Activated T-helper 1 cell treated with anti-CD3 and anti-CD28 coated beads, Interleukin-12 subunit alpha, Interleukin-12 subunit beta, Interleukin-2, Interleukin-4 antibody, amounts not matched to agents 30 ng/mL and 10 ng/mL and 1 ng/mL, durations not matched to agents 14 hours and 24 hours and 36 hours (primary cell): ENCODE measurements at regions of chr16 and their contacts with region 1.

Region 1: DNA sequence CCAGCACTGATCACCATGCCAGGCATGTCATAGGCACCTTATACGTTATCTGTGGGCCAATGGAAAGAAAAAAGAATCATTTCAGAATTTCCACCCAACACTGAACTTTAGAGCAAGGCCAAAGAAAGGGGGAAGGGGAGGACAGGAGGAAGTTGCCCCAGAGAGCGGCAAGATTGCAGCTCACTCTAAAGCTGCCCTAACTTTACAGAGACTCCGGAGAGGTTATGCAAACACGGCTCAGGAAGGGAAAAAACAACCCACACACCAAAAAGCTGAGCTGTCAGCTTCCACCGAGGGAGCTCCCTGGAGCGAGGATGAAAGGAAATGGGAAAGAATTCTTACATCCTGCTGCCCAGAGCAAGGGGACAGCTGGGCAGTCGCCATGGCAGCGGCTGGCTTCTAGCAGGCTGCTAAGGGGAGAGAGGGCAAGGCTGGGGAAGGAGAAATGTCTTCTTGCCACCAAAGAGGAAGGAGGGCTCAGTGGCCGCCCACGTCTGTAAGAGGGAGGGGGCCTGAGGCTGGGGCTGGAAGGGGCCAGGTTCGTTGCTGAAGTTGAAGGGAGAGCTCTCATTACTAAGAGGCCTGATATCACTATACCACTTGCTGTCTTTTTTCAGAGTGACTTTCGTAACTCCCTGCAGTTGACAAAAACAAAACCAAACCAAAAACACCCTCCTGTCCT is 18.2 kb downstream of the COTL1 start:
- DNase-seq: peak; percentile 46
- H3K4me3 Mint-ChIP-seq: peak overlapping the region; percentile 80
- H3K27ac Mint-ChIP-seq: peak overlapping the region; percentile 97
- H3K4me1 Mint-ChIP-seq: peaks cover 84% of the 10 kb centered on the region
- H3K27me3 Mint-ChIP-seq: no peaks in the 10 kb centered on the region

Region 2: GRCh38 chr16:84511180-84511824 is 88.4 kb before region 1 on chr16:
- intact Hi-C with region 1: loop called (anchors 1 kb)
- DNase-seq: peak; percentile 73
- H3K4me3 Mint-ChIP-seq: peak overlapping the region; percentile 38
- H3K27ac Mint-ChIP-seq: peak overlapping the region; percentile 49
- H3K4me1 Mint-ChIP-seq: peaks cover 72% of the 10 kb centered on the region
- H3K27me3 Mint-ChIP-seq: no peaks in the 10 kb centered on the region

Region 3: GRCh38 chr16:84548971-84549844 is 50.5 kb before region 1 on chr16:
- intact Hi-C with region 1: loop called (anchors 1 kb)
- DNase-seq: peak; percentile 30
- H3K4me3 Mint-ChIP-seq: peak overlapping the region; percentile 87
- H3K27ac Mint-ChIP-seq: peak overlapping the region; percentile 96
- H3K4me1 Mint-ChIP-seq: peaks cover 72% of the 10 kb centered on the region
- H3K27me3 Mint-ChIP-seq: no peaks in the 10 kb centered on the region

Region 4: GRCh38 chr16:84647828-84648594 is 48.3 kb after region 1 on chr16 and contains the start of gene KLHL36:
- intact Hi-C with region 1: loop called (anchors 2 kb)
- DNase-seq: peak; percentile 76
- H3K4me3 Mint-ChIP-seq: peak within 1 kb of the TSS; percentile 95
- H3K27ac Mint-ChIP-seq: peak within 1 kb of the TSS; percentile 92
- H3K4me1 Mint-ChIP-seq: peaks cover 48% of the 10 kb centered on the region
- H3K27me3 Mint-ChIP-seq: peaks cover 14% of the 10 kb centered on the region
- total RNA-seq, gene KLHL36: 39.3 and 42.6 TPM in 2 replicates